ENCODE measurements at regions of chr2 and their contacts with region 1.

Region 1: DNA sequence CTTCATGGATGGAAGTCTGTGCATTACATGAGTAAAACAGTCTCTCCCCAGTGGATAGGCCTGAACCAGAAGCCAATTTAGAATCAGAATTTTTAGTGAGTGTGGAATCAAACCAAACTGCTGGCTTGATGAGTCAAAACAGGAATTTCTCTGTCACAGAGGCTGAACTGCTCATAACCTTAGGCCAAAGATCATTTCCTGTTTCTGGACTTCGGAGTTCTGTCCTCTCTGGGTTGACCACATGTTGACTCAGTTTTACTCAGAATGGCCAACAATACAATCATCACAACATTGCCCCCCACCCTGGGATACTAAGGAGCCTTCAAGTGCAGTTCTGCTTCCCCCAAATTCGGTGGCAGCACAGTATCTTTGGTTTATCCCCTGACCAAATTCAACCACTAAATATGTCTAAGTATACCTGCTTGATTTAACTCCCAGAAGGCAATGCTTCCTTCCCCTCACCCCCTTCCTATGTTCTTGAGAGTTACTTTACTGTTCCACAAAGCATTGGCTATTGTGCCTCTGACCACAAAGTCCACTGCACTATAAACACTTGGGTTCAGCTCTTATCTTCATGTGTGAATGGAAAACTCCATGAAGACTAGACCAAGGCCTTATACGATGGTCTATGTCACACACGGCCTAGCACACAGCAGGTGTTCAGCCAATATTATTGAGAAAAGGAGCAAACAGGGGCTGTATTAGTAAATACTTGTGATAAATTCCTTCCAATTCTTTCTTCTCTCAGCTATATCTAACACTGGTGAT is 67.8 kb downstream of the NXPH2 start:
- DNase-seq: peak; percentile 51
- CTCF ChIP-seq: no peak

Region 2: GRCh38 chr2:137454886-137455285 is 1257.5 kb before region 1 on chr2:
- in situ Hi-C with region 1: no loop called
- DNase-seq: no peak
- CTCF ChIP-seq: no peak

Region 3: DNA sequence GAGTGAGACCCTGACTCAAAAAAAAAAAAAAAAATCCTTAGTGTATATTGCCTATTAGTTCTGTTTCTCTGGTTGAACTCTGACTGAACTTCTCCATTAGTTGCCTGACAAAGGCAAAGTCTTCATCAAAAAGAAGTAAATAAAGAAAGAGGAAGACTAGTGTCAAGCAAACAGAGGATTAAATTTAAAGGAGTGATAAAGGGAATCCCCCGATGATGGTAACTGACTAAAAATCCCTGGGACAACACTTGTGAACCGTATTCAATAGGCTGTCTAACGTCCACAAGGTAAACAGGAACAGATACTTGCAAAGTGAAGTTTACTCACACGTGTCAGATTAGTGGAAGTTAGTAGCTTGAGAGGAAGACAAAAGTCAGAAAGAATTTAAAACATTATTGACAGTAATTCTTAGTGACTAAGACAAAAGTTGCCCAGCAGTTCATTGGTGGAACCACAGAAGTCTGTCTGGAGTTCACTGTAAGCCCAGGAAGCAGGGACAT is 237.1 kb before region 1 on chr2:
- in situ Hi-C with region 1: loop called (anchors 25 kb)
- DNase-seq: peak; percentile 22
- CTCF ChIP-seq: no peak

Measured in GM13976 (cell line).